ENCODE measurements at regions of chr14 and their contacts with region 1.

Region 1: DNA sequence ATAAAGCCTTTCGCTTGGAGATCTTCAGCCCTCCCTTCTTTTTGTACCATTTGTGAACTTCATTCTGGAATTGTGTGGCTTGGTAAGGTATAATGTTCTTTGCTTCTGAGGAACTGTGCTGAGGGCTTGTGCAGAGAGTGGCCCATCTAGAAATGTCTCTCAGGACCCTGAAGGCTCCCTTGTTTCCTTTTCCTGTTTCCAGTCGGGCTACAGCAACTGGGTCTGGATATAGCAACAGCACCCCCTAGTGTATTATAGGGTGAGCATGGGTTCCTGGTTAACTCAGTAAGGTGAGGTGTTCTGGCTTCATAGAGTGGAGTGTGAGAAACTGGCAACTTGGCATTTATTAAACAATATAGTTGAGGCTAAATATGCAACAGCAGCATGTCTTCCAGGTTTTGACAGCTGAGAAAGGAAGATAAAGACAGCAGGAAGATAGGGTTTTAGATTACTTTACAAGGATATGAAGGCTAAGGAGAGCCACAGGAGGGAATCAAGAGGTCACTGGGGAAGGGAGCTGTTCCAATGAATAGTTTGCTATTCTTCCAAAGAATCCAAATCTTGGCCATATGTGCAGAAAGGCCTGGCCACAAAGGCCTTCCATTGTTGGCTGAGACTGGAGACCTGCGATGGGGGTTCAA is 49.1 kb upstream of the RNU6-8 start:
- DNase-seq: peak; percentile 34
- ATAC-seq: peak; percentile 82 to 86

Region 2: DNA sequence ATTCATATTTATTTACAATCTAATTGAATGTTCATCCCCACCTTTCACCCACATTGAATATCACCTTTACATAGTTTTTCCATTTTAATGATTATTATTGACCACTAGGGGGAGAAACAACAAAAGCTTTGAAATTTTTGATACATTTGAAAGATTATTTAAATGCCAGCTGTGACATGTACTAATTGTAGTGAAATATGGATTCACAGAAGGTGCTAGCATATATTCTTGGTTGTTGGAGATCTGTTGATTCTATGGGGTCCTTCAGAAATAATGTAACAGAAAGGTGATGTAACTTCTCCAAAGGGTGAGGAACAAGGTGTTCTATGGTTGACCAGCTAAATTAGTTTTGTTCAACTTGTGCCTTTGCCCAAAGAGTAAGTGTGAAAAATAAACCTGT is 741.9 kb before region 1 on chr14:
- intact Hi-C with region 1: loop called (anchors 2 to 5 kb)
- DNase-seq: no peak
- ATAC-seq: no peak

Region 3: DNA sequence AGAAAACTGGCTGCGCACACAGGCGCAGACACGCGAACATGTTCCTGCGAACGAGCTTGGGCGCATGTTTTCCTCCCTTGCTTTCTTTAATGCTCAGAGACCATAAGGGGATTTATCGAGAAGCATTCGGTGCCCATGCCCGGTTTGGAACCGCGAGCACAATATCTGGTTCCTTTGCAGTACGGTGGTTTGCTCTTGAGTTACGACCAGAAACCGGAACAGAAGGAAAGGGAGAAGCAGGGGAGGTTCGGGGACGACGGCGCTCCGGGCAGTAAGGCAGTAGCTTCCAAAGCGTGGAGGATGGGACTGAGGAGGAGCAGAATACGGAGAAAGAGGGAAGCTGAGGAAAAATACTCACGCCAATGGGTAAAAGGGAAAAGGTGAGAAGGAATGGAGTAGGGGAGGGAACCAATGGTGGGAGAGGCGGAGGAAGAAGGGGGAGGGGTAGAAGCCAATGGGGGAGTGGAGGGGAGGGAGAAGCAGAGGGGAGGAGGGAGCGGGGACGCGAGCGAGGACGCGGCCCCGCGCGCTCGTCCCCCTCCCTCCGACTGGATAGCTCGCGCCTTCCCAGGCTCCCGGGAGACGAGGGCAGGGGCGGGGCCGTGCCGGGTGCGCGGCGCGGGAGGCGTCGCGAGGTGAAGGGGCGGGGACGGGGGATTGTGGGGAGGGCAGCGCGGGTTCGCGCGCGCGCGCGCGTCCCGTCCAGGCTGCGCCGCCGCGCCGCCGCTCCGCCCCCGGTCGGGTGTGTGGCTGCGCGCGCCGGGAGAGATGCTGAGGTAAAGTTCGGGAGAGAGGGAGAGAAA is 175.7 kb before region 1 on chr14:
- intact Hi-C with region 1: loop called in 1 of 2 experiments (anchors 2 kb)
- DNase-seq: peak; percentile 97
- ATAC-seq: peak; percentile 93 to 95

Region 4: DNA sequence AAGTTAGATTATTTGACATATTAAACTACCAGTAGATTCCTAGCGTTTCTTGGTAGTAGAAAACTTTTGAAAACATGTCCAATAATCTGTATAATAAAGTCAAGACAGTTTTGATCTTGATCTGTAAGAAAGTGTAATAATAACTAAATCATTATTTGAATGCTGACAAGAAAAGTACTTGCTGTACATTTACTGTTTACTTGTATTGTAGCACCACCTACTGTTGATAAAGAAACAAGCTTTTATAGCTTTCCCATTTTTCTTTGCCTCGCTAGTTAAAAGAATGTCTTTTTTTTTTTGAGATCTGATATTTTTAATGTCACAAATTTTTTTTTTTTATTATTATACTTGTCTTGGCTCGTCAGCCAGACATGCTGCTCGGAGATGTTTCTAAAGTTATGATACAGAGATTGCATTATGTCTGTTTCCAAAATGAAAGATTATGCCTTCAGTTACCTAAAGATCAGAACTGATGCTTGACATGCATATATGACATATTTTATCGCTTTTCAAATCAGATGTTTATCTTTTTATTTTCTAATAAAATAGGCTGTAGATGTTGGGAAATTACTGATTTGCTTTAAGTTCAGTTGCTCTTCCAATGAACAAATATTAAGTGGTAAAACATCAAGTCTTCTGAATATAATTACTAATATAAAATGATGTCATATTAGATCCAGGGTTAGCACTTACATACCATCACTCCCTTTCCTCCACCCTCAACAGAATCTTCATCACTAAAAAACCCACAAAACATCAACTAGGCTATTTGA is 217.4 kb after region 1 on chr14:
- intact Hi-C with region 1: loop called in 1 of 2 experiments (anchors 5 kb)
- DNase-seq: no peak
- ATAC-seq: peak in 1 of 2 donors; percentile 59

Region 5: DNA sequence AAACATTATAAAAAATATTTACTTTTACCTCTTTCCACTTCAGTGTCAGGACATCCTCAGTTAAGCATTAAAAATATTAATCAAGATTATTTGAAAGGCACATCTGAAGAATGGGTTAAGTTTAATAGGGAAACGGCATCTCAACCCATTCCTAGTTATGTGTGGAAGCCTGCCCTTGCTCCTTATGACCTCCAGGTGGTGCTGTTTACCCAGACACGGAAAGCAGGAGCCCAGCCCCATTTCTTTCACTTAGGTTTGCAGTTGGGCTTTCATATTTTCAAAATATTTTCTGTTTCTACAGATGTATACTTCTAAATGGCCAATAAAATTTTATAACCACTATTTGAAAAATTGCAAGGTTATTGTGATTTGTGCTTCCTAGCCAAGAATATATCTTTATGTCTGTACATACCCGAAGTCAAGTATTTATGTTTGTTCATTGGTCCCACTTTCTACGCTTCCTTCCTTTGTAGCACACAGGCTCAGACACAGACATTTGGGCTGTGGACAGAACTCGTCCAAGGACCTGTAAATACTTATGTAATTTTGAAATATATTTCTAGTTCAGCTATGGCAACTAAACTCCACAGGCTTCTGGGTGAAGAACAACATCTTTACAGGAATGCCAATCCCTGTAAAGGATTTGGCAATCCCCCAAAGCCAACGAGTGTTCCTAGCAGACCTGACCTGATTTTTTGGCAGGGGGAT is 324.1 kb after region 1 on chr14:
- intact Hi-C with region 1: no loop called
- DNase-seq: peak; percentile 31
- ATAC-seq: peak; percentile 88 to 91

Measured in left cardiac atrium (tissue), 4 donors.